ENCODE measurements at regions of chr1 and their contacts with region 1.

Region 1: DNA sequence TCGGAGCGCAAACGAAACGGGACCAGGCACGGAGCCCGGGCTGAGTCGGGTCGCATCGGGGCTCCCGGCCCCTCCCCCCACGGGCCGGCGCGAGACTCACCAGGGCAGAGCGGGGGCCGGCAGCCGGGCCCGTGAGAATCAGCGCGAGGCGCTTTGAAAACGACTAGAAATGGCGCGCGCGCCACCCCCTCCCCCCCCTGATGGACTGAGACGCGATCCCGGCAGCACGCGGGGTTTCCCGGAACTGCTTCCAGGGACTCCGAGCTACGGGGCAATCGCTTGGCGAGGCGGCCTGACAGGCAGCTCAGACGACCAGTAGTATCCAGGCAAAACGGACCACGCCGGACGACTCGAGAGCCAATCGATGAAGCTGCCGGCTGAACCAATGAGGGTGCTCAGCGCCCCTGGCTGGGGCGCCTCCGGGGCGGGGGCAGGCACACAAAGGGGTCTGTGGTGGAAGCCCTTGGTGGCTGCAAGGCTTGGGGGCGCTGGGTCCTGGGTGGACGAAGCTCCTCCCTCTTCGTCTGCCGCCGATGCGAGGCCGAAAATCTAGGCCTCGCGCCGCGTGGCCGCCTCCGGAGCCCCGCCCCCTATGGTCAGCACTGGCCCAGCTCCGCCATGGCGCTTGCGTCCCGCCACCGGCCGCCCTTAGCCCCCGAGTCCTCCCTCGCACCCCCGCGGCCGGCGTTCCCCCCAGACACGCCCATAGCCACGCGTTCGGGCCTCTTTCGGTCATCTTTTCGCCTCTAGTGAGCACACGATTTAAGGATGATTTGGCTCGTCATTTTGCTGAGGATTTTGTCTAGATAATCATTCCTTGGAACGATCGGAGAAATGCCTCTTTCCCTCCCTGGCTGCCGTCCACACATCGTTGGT is at the start of gene HNRNPR:
- DNase-seq: peak; percentile 100
- ATAC-seq: peak; percentile 98
- total RNA-seq, gene HNRNPR: 59.3 TPM

Region 2: GRCh38 chr1:23263380-23263887 is 80.9 kb before region 1 on chr1:
- intact Hi-C with region 1: no loop called
- DNase-seq: no peak
- ATAC-seq: no peak

Region 3: DNA sequence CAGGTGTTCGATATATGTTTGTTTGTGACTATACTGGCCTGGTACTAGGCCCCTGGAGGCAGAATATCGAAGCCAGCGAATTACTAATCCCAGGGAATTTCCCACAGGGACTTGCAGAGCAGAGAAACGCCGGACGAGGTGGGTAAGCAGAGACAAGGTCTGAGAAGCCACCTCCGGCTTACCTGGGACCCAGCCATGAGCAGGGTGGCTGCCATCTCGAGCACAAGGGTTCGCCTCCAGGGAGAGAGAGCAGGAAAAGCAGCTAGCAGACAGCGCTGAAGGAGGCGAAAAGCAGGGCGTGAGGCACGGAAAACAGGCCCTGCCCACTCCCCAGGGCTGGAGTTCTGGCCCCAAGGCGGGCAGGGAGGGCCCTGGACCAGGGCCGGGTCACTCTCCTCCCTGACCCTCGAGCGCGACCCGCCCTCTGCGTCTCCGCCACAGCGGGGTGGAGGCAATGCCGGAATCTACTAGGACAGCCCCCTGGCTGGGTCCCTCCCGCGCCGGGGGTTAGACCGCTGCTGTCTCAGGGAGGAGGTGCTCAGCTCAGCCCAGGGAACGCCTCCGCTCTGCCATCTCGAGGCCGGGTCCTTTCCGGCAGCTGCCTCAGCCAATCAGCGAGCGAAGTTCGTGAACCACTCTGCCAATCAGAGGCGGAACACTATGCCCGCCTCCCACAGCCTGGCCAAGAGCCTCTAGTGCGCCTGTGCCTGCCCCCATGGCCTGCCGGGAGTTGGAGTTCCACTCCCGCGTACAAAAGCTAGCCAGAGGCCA is 23.6 kb after region 1 on chr1:
- intact Hi-C with region 1: loop called (anchors 1 kb)
- DNase-seq: peak; percentile 99
- ATAC-seq: peak; percentile 92

Region 4: DNA sequence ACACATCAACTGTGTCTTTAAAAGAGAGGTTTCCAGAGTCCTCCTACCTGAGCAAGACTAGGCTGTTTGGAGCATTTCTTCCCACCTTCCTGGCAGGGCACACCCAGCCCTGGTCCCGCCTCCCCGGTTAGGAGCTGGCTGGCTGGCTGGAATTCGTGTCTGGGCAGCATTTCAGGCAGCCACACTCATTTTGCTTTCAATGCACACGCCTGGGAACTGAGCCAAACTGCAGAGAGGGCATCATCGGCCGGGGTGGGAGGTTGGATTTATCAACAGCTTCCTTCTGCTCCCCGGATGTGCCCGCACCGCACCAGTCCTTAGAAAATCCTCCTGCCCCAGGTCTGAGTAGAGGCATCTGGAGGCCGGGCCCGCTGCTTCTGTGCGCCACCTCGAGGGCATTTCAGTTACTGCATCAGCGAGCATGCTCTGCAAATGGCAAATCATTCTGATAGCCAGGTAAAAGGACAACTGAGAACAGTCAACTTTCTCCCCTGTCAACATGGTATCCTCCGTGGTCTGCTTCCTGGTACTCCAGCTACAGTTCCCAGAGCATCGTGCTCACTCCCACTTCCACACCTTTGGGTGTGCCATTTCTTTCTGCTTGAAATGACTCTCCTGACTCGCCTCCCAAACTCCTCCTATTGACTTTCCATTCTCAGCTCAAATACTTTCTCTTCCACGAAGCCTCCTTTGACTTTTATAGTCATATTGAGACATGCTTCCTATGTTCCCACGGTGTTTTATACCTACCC is 59.6 kb after region 1 on chr1:
- intact Hi-C with region 1: loop called (anchors 1 kb)
- DNase-seq: peak; percentile 89
- ATAC-seq: peak; percentile 84

Region 5: DNA sequence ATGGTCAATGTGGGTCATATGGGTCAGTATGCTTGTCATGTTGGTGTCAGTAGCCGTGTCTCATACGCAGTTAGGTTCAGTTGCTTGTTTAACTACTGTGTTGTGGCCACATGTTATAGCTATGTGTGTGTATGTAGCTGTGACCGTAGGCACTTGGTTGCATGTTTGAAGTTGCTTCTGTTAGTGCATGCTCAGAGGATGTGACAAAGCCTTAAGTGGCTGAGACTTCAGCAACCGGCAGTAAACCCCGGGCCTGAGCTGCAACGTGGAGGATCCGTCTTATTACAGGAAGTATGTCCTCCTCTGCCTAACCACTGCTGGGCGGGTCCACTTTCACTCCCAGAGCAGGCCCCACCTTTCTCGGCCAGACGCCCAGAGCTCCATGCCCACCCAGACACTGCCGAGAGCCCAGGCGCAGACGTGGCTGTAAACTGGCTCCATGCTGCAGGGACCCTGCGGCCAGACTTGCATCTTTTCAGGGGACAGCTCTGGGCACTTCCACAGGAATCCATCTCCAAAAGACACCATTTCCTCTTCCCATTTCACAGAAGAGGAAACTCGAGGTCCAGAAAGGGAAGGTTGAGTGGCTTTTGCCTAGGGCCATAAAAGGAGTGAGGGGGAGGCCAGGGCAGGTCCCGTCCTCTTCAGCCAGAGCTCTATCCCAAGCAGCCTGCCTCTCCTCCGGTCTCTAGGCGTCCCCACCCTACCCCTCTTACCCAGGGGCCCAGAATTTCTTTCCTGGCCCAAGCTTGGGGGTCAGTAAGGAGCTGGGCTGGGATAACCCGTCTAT is 78.1 kb after region 1 on chr1:
- intact Hi-C with region 1: loop called (anchors 5 kb)
- DNase-seq: peak; percentile 86
- ATAC-seq: peak; percentile 44

Region 6: DNA sequence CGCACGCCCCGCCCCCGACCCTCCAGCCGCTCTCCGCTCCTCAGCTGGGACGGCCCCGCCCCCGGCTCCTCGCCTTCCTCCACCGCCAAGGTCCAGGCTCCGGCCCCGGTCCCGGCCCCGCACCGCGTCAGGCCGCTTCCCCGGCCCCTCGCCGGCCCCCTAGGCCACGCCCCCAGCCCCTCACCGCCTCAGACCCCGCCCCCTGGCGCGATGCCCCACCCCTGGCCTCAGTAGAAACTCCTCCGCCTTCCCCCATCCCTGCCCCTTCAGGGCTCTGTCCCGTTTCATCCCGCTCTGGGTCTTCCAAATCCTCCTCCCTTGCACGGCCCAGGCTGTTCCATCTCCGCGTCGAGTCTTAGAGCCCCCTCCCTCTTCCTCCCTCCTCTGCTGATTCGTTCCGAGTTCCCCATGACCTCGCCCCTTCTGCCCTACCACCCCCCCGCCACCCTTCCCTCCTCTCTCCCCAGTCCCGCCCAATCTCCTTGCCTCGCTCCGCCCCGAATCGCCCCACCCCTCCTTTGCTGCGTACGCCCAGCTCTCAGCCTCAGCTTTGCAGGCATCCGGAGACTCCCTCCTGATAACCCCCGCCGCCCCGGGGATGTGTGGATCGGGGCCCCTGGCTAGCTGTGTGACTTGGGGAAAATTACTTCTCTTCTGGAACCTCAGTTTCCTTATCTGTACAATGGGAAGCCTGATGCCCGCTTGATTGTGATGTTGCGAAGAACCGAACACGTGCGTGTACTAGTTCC is 140.1 kb after region 1 on chr1:
- intact Hi-C with region 1: loop called (anchors 2 kb)
- DNase-seq: peak; percentile 96
- ATAC-seq: peak; percentile 95

Region 7: DNA sequence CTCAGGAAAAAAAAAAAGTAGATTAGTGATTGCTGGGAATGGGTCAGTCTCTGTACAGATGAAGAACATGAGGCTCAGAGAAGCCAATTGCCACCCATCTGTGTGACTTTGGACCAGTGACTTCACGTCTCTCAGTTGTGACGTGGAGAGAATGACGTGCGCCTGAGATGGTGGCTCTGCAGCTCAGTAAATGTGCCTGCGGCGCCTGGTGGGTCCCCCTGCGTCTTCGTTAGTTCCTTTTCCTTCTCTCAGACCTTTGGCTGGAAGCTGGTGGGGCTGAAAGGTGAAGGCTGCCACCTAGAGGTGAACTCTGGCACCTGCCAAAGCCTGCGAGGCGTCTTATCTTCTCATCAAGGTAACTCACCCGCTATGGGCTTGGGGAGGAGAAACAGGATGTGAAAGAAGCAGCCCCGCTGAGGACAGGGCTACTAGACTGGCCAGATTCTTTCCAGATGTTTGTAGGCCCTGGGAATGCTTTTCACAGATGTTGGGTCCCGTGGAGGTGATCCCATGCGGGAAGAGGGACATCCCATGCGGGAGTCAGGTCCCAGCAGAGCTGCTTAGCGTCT is 195.4 kb after region 1 on chr1:
- intact Hi-C with region 1: loop called (anchors 10 kb)
- DNase-seq: peak; percentile 91
- ATAC-seq: peak; percentile 87

Region 8: GRCh38 chr1:23727362-23727827 is 383.0 kb after region 1 on chr1:
- intact Hi-C with region 1: no loop called
- DNase-seq: peak; percentile 87
- ATAC-seq: peak; percentile 98

Measured in Right ventricle myocardium inferior (tissue), 1 donor.